Left ventricle myocardium inferior (tissue), 1 donor: ENCODE measurements at regions of chr21 and their contacts with region 1.

Region 1: GRCh38 chr21:17590430-17590829 is 22.3 kb downstream of the BTG3 start:
- DNase-seq: no peak
- H3K4me3 ChIP-seq: no peak overlapping the region
- H3K27ac ChIP-seq: no peak overlapping the region
- H3K4me1 ChIP-seq: no peaks in the 10 kb centered on the region
- H3K27me3 ChIP-seq: no peaks in the 10 kb centered on the region
- CTCF ChIP-seq: no peak

Region 2: DNA sequence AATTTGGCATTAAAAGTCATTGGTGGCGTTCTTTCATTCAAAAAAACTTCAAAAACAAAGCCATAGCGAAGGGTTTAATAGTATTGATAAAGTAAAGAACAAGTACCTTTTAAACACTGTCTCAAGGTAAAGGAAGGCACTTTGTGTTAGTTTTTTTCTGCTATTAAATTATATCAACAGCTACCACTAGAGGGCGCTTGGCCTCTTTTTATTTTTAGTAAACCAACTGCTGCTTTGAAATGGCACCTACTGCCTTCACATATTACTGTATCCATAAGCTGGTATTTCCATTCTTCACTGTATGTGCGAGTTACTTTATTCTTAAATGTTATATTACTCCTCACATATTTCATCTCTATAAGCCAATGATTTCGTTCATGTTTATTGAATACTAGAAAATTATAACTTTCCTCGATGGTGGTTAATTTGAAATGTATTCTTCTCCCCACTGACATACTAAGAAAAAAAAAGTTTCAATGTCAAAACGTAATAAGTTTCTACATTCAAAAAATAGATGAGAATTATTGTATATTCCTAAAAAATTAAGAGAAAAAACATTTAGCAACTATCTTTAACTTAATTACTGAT is 203.3 kb before region 1 on chr21:
- intact Hi-C with region 1: loop called (anchors 5 kb)
- DNase-seq: no peak
- H3K4me3 ChIP-seq: no peak overlapping the region
- H3K27ac ChIP-seq: no peak overlapping the region
- H3K4me1 ChIP-seq: no peaks in the 10 kb centered on the region
- H3K27me3 ChIP-seq: no peaks in the 10 kb centered on the region
- CTCF ChIP-seq: peak; percentile 79

Region 3: GRCh38 chr21:17660449-17660848 is 70.0 kb after region 1 on chr21:
- intact Hi-C with region 1: no loop called
- DNase-seq: no peak
- H3K4me3 ChIP-seq: no peak overlapping the region
- H3K27ac ChIP-seq: peak overlapping the region; percentile 30
- H3K4me1 ChIP-seq: peaks cover 4% of the 10 kb centered on the region
- H3K27me3 ChIP-seq: no peaks in the 10 kb centered on the region
- CTCF ChIP-seq: no peak